ENCODE measurements at regions of chr16 and their contacts with region 1.

Region 1: GRCh38 chr16:19179546-19180490 is 11.8 kb downstream of the SYT17 start:
- DNase-seq: peak; percentile 78
- H3K4me3 ChIP-seq: no peak overlapping the region
- H3K27ac ChIP-seq: no peak overlapping the region
- H3K4me1 ChIP-seq: no peaks in the 10 kb centered on the region
- H3K27me3 ChIP-seq: no peaks in the 10 kb centered on the region
- CTCF ChIP-seq: peak; percentile 67 to 80 (median 74)
- EP300 ChIP-seq: no peak
- POLR2A ChIP-seq: no peak

Region 2: DNA sequence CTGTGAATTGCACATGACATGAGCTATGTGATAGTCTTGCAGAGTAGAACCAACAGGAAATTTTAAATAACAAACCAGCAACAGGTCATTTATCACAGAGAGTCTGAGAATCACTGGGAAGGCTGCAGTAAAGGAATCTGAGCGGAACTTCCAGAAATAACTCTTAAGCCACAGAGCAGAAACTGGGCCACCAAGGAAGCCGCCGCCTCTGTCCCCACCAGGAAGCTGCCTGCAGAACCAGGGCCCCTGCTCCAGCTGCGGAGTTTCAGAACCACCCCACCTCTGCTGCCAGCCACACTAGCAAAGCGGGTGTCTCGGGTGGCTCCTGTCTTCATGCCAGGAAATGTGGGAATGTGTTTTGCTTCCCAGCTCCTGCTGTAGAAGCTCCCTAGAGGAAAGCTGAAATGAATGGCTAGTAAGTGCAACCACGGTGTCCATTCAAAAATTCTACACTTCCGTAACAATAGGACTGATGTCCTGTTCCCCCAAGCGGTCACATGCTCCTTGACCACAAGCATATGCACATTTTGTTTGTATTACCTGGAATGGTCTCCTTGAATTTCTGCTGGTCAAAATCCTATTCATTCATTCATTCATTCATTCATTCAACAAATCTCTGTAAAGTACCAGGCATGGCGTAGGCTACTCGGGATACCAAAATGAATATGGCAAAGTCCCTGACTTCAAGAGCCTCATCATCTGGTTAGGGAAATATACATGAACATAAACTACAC is 73.8 kb before region 1 on chr16:
- in situ Hi-C with region 1: no loop called
- intact Hi-C with region 1: no loop called
- DNase-seq: no peak
- H3K4me3 ChIP-seq: no peak overlapping the region
- H3K27ac ChIP-seq: no peak overlapping the region
- H3K4me1 ChIP-seq: peaks cover 0 to 7% (median 0%) of the 10 kb centered on the region in 4 donors
- H3K27me3 ChIP-seq: no peaks in the 10 kb centered on the region
- CTCF ChIP-seq: no peak
- EP300 ChIP-seq: no peak
- POLR2A ChIP-seq: no peak

Region 3: GRCh38 chr16:19375561-19376158 is 195.8 kb after region 1 on chr16:
- in situ Hi-C with region 1: loop called in 1 of 4 experiments (anchors 10 kb)
- intact Hi-C with region 1: no loop called
- DNase-seq: peak; percentile 40
- H3K4me3 ChIP-seq: no peak overlapping the region
- H3K27ac ChIP-seq: no peak overlapping the region
- H3K4me1 ChIP-seq: peaks cover 0 to 7% (median 0%) of the 10 kb centered on the region in 4 donors
- H3K27me3 ChIP-seq: no peaks in the 10 kb centered on the region
- CTCF ChIP-seq: peak; percentile 84 to 90 (median 88)
- EP300 ChIP-seq: no peak
- POLR2A ChIP-seq: no peak

Region 4: DNA sequence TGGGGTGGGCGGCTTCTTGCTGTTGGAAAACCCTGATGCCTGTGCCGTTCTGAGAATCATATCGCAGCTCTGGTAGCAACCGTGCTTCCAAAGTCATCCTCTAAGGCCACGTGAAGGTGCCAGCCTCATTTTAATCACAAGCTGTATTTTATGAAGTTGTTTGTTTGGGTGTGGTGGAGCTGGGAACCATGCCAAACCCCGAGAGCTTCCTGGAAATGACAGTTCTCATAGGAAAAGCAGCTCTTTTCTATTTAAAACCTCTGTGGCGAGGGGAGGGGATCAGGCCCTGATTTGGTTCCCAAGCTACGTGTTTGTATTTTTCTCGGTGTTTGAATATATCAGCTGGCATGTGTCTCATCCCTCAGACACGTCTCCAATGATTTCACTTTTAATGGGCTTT is 516.5 kb after region 1 on chr16:
- in situ Hi-C with region 1: no loop called
- intact Hi-C with region 1: no loop called
- DNase-seq: peak; percentile 92
- H3K4me3 ChIP-seq: no peak overlapping the region
- H3K27ac ChIP-seq: peak overlapping the region; percentile 71 to 80 (median 77)
- H3K4me1 ChIP-seq: peaks cover 24 to 62% (median 44%) of the 10 kb centered on the region in 4 donors
- H3K27me3 ChIP-seq: no peaks in the 10 kb centered on the region
- CTCF ChIP-seq: no peak
- EP300 ChIP-seq: no peak
- POLR2A ChIP-seq: no peak

Measured in transverse colon (tissue), 4 donors.